Thyroid gland (tissue), 4 donors: ENCODE measurements at regions of chr10 and their contacts with region 1.

Region 1: DNA sequence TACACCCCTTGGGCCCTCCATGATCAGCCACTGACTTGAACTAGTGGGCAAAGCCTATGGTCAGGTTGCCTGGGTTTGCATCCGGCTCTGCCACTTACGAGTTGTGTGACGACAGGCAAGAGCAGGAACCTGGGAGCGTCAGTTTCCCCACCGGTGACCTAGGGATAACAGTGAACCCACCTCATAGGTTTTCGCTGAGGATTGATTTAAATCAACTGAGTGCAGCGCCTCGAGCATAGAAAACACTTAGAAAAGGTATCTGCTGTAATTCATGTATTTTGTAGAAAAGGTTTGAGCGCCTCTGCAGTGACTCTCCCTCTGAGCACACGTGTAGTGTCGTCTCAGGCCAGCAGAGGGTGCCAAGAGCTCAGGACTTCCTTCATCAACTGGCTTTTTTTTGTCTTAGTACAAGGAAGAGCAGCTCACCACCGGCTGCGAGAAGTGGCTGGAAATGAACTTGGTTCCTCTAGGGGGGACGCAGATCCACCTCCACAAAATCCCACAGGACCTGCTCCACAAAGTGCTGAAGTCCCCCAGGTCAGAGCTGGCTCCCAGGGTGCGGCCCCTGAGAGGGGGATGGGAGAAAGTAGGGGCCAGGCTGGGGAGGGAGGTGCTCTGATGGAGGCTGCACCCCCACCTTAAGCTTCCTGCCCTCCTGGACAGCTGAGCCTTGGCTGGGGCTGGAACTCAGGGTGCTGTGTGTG is 27.7 kb downstream of the BTBD16 start:
- DNase-seq: peak; percentile 65 to 77
- H3K4me3 ChIP-seq: no peak overlapping the region
- H3K27ac ChIP-seq: no peak overlapping the region
- H3K4me1 ChIP-seq: peaks cover 3 to 5% of the 10 kb centered on the region in 2 donors
- H3K27me3 ChIP-seq: no peaks in the 10 kb centered on the region
- CTCF ChIP-seq: peak; percentile 78 to 95 (median 90)
- POLR2A ChIP-seq: no peak

Region 2: DNA sequence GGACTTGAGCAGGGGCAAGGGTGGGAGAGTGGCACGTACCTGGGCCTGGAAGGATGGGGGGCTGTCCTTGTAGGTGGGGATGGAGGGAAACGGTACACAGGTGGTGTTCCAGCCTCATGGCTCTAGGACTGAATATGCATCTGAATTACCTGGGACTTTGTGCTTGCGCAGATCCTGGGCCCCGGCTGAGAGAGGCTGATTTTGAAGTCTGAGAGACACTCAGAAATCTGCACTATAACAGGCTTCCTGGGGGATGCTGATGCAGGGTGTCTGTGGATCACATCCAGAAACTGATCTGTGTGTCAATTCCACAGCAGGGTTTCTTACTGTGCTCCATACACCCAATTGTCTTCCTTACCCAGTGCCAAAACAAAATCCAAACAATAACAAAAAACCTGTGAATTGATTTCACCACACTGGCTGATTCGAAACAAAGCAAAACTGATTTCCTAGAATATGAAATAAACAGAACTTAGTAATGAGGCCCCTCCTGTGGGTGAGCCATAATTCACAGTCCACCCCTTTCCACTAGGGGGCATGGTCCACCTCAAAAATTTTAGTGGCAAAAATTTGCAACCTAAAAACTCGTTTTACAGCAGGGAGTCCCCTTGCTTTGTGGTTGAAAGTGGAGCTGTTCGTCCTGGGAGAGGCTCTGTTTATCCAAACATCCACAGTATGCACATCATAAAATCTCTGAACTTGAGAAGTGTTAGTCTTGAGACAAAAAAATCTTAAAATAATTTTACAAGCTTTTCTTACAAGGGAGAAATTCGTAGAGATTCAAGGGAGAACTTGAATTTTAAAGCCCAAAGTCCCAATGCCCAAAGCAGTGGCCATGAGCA is 43.8 kb after region 1 on chr10:
- intact Hi-C with region 1: loop called (anchors 5 kb)
- DNase-seq: peak; percentile 33 to 50
- H3K4me3 ChIP-seq: no peak overlapping the region
- H3K27ac ChIP-seq: no peak overlapping the region
- H3K4me1 ChIP-seq: peaks cover 0 to 6% of the 10 kb centered on the region in 2 donors
- H3K27me3 ChIP-seq: no peaks in the 10 kb centered on the region
- CTCF ChIP-seq: peak; percentile 52 to 71 (median 64)
- POLR2A ChIP-seq: no peak

Region 3: DNA sequence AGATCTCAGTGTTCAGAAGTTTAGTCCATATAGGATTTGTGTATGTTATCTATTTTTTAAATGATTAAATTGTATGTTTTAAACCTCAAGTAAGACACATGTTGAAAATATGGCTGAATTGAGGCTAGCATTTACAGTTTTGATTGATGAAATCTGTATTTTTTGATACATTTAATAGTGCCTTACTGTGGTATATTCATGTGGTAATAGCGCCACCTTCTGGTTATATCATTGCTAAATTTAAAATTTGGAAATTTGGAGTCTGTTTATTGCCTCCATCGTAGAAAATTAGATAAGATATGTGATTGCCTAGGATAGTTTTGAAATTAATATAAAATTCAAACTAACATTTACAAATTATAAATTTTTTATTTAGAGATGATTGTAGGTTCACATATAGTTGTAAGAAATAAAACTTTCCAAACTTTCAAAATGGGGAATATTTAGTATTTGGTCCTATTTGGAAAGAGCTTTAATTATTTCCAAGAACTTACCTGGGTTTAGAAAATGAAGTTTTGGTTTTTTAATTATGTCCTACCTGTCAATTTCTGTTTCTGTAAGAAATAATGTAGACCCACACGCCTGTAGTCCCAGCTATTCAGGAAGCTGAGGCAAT is 136.6 kb after region 1 on chr10:
- intact Hi-C with region 1: loop called (anchors 2 kb)
- DNase-seq: no peak
- H3K4me3 ChIP-seq: no peak overlapping the region
- H3K27ac ChIP-seq: no peak overlapping the region
- H3K4me1 ChIP-seq: no peaks in the 10 kb centered on the region
- H3K27me3 ChIP-seq: no peaks in the 10 kb centered on the region
- CTCF ChIP-seq: peak; percentile 30 to 80 (median 66)
- POLR2A ChIP-seq: no peak

Region 4: DNA sequence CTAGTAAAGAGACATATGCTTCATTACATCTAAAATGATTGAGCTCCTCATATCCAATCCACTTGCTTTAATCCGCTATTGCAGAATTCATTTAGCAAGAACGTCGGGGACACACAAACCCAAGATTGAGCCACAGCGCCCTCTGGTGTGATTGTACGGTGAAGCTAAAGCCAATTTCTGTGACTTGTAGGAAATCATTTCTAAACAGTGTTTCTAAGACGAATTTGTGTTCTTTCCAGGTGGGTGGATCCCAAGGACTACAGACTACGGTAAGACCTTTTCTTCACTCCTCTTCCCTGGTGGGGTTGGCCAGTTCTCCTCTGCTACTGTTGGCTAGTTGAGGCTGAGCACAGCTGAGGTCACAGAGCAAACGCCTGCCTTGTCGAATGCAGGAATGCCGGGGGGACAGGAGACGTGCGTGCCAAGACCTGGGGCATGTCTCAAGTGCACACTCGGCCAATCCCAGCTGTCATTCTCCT is 267.0 kb after region 1 on chr10:
- intact Hi-C with region 1: loop called (anchors 5 kb)
- DNase-seq: peak; percentile 87 to 92
- H3K4me3 ChIP-seq: no peak overlapping the region
- H3K27ac ChIP-seq: no peak overlapping the region
- H3K4me1 ChIP-seq: peaks cover 5 to 7% of the 10 kb centered on the region in 2 donors
- H3K27me3 ChIP-seq: no peaks in the 10 kb centered on the region
- CTCF ChIP-seq: peak; percentile 60 to 94 (median 88)
- POLR2A ChIP-seq: no peak

Region 5: GRCh38 chr10:122703439-122704118 is 404.8 kb after region 1 on chr10:
- intact Hi-C with region 1: loop called (anchors 10 kb)
- DNase-seq: peak; percentile 60 to 68
- H3K4me3 ChIP-seq: no peak overlapping the region
- H3K27ac ChIP-seq: no peak overlapping the region
- H3K4me1 ChIP-seq: no peaks in the 10 kb centered on the region
- H3K27me3 ChIP-seq: no peaks in the 10 kb centered on the region
- CTCF ChIP-seq: peak; percentile 54 to 80 (median 66)
- POLR2A ChIP-seq: no peak